Posterior vena cava (tissue), 2 donors: ENCODE measurements at regions of chr10 and their contacts with region 1.

Region 1: GRCh38 chr10:13271552-13272163 is 28.2 kb downstream of the PHYH start:
- DNase-seq: no peak

Region 2: DNA sequence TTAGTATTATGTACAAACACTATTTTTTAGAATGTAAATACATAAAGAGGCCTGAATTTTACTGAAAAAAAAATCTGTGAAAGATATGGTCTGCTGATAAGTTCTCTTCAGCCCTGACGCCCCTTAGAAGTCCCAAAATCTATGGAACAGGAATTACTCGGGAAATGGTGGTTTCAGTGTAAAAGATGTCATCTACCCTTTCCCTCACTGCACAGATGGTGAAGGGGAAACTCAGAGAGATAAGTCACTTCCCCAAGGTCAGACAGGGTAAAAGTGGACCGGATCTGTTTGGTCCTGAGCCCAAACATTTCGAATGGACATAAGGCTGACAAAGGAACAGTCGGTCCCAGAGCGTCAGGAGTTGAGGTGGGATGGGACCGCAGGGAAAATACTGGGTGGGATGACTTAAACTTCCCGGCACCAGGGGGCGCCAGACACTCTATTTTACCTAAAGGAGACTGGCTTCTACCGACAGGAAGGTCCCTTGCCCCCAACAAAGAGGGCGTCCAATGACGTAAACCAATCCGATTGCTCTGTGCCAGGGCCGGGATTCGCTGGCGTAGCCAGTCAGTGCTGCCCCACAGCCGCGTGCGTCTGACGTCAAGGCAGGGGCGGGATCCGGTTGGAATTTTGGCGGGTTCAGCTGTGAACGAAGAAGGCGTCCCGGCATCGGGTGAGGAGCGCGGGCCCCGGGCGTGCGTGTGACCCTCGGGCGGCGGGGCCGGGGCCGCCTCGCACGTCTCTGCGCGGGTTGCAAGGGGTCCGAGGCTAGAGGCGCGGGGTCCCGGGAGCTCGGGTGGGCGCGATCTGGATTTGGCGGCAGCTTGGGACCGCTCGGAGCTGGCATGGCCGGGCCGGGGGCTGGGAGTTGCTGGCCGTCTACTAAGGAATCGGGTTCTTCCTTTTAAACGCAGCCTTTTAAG is 110.5 kb before region 1 on chr10 and contains the start of gene MCM10:
- intact Hi-C with region 1: loop called in 1 of 2 experiments (anchors 10 kb)
- DNase-seq: peak; percentile 99
- total RNA-seq, gene MCM10: 0.23 to 0.76 TPM

Region 3: GRCh38 chr10:13234172-13234571 is 37.5 kb before region 1 on chr10 and contains the start of gene UCMA:
- intact Hi-C with region 1: loop called in 1 of 2 experiments (anchors 2 kb)
- DNase-seq: no peak
- total RNA-seq, gene UCMA: not detected